GM18951 (cell line): ENCODE measurements at regions of chr4 and their contacts with region 1.

Region 1: GRCh38 chr4:143381171-143382118 is 44.8 kb downstream of the GAB1 start:
- POLR2A ChIP-seq: no peak

Region 2: GRCh38 chr4:142660728-142661127 is 720.7 kb before region 1 on chr4:
- in situ Hi-C with region 1: no loop called
- POLR2A ChIP-seq: no peak

Region 3: GRCh38 chr4:143473334-143474126 is 92.1 kb after region 1 on chr4:
- in situ Hi-C with region 1: loop called (anchors 10 kb)
- POLR2A ChIP-seq: no peak

Region 4: DNA sequence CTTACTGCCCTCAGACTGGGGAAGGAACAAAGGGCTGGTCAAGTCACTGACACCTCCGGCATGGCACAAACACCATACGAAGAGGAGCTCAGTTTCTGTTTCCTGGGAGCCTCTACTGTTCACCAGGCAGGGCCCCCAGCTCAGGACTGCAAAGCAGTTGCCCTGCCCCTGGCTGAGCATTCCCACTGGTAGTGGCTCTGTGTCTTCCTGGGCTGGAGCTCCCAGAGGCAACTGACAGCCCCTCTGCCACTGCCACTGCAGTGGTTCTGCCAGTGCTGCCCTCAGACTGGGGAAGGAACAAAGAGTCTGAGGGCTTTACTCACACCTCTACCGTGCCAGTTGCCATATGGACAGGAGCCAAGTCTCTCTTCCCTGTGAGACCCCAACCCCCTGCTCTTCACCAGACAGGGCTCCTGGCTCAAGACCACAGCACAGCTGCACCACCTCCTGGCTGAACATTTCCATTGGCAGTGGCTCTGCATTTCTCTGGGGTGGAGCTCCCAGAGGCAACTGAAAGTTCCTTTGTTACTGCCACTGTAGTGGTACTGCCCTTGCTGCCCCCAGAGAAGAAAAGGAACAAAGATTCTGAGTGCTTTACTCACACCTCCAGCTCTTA is 200.0 kb after region 1 on chr4:
- in situ Hi-C with region 1: no loop called
- POLR2A ChIP-seq: no peak